MCF 10A (cell line): ENCODE measurements at regions of chr11 and their contacts with region 1.

Region 1: DNA sequence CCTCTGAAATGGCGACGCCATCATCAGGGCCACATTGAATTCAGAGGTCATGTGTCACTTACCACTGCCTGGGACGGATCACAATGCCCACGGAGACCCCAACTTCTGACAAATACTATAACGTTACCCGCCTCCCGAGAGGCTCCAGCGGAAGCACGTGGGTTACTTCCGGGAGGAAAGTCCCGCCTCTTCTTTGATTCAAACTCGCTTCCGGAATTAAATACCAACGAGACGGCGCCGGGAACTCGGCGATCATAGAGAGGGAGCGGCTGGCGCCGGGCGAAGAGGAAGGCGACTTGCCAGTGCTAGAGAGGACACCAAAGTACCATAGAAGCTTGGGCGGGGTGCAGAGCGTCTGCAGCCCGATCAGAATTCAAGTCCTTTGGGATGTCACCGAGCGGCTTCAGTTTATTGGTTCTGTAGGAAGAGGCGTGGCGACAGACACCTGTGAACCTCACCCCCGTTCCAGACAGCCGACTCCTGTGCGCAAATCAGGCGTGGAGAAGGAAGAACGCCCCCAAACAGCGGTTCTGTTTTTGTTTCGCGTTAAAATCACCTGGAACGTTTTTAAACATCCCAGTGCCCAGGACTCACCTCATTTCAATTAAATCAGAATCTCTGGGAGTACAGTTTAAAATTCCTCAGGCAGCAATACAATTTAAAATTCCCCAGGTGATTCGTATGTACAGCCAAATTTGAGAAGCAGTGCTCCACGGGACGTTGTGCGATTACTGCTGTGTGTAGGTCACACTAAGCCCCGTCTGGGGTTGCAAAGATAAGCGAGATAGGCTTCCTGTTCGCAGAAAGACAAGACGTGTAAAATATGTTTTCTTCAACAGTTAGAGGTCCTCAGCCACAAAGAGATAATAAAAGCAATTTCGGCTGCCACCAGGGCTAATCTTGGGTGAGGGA is at the start of gene TIMM10:
- DNase-seq: peak; percentile 98
- H3K4me3 Mint-ChIP-seq: peak within 1 kb of the TSS; percentile 96
- H3K27ac Mint-ChIP-seq: peak within 1 kb of the TSS; percentile 79
- H3K4me1 Mint-ChIP-seq: peaks cover 11% of the 10 kb centered on the region
- H3K27me3 Mint-ChIP-seq: peaks cover 8% of the 10 kb centered on the region
- CTCF ChIP-seq: no peak
- total RNA-seq, gene TIMM10: 52.2 and 80.3 TPM in 2 replicates

Region 2: DNA sequence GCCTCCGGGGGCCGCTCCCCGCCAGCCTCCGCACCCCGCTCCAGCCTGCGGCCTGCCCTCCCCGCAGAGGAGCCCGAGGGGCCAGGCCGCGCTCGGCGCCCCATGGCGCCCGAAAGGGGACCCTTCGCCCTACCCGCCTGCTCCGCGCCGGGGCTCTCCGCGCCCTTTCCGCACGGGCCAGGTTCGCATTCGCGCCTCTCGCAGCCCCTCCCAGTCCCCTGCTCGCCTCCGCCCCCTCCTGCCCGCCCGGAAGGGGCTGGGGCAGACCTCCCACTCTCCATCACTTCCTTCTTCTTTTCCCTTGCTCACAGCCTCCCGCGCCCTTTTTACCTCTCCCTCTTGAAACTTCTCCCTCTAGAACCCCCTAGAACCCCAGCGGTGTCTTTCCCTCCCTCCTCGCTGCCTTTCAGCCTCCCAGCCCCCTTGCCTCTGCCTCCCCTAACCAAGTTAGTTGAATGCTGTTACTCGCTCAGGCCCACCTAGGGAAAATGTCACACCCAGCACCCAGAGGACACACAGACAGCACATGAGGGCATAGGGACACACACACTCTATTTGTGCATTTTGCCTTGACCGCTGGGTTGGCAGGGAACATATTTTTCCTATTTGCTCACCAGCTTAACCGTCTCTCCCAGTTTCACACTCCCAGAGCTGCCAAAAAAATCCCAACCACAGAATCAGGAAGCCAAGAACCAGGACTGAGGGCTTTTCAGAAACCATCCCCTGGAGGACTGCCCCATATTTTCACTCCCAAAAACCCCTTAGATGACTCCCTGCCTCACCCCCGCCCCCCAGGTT is 103.7 kb before region 1 on chr11 and contains the start of gene SLC43A3:
- CTCF ChIA-PET with region 1: interaction called, 4 read pairs
- POLR2A ChIA-PET with region 1: interaction called, 11 read pairs
- intact Hi-C with region 1: no loop called
- DNase-seq: peak; percentile 89
- H3K4me3 Mint-ChIP-seq: peak within 1 kb of the TSS; percentile 84
- H3K27ac Mint-ChIP-seq: peak within 1 kb of the TSS; percentile 98
- H3K4me1 Mint-ChIP-seq: peaks cover 43% of the 10 kb centered on the region
- H3K27me3 Mint-ChIP-seq: no peaks in the 10 kb centered on the region
- CTCF ChIP-seq: no peak
- total RNA-seq, gene SLC43A3: 96.6 and 112 TPM in 2 replicates

Region 3: DNA sequence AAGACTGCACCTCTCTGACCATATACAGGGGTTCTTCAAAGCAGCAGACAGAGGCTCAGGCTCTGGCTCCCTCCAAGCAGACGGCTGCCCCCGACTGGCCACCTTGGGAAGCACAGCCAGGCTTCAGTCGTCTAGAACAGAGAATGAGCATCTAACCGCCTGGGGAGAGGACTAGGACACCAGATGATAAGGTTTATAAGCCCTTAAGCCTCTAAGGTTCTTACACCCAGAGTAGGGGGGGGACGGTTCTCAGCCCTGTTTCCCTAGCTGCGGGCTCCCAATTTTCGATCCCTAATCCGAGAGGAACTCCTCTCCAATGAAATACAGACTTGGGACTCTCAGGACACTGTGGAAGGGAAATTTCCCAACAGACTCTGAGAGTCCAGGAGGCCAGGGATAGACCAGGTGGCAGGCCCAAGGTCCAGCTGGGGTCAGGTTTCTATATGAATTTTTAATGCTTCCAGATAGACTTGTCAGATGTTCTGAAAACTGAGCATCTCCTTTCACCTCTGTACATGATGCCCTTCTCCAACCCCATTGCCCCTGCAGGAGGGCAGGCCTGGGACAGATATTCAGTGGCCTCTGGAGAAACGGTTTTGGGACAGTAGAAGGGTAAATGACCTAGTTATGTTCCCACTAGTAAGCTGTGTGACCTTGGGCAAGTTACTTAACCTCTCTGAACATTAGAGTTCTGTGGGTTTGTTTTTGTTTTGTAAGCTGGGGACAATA is 50.3 kb before region 1 on chr11:
- CTCF ChIA-PET with region 1: interaction called, 19 read pairs
- POLR2A ChIA-PET with region 1: interaction called, 3 read pairs
- intact Hi-C with region 1: no loop called
- DNase-seq: peak; percentile 68
- H3K4me3 Mint-ChIP-seq: no peak overlapping the region
- H3K27ac Mint-ChIP-seq: no peak overlapping the region
- H3K4me1 Mint-ChIP-seq: peaks cover 2% of the 10 kb centered on the region
- H3K27me3 Mint-ChIP-seq: peaks cover 24% of the 10 kb centered on the region
- CTCF ChIP-seq: peak; percentile 72

Region 4: GRCh38 chr11:57499413-57499982 is 31.4 kb before region 1 on chr11:
- CTCF ChIA-PET with region 1: interaction called, 212 read pairs
- POLR2A ChIA-PET with region 1: no interaction called
- intact Hi-C with region 1: no loop called
- DNase-seq: peak; percentile 91
- H3K4me3 Mint-ChIP-seq: peak overlapping the region; percentile 35
- H3K27ac Mint-ChIP-seq: peak overlapping the region; percentile 35
- H3K4me1 Mint-ChIP-seq: peaks cover 8% of the 10 kb centered on the region
- H3K27me3 Mint-ChIP-seq: no peaks in the 10 kb centered on the region
- CTCF ChIP-seq: no peak

Region 5: DNA sequence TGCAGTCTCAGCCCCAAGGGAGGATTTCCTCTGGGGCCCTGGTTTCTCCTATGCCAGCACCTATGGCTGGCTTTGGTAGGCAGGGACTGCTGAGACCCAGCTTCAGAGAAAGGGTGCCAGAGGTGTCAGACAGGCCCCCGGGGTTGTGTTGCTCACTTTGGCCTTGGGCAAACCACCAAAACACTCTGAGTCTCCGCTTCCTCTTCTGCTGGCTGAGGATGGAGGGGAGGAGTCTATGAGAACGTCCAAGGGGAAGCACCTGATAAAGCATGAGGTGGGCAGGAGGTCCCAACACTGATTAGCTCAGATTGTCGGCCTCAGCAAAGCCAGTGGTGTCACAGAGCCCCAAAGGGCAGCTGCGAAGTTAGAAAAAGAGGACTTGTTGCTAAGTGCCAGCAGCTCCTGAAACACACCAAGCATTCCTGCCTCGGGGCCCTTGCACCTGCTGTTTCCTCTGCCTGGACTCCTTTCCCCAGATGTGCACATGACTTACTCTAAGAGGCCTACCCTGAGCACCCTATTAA is 17.1 kb after region 1 on chr11:
- CTCF ChIA-PET with region 1: interaction called, 10 read pairs
- POLR2A ChIA-PET with region 1: interaction called, 3 read pairs
- intact Hi-C with region 1: no loop called
- DNase-seq: no peak
- H3K4me3 Mint-ChIP-seq: no peak overlapping the region
- H3K27ac Mint-ChIP-seq: no peak overlapping the region
- H3K4me1 Mint-ChIP-seq: peaks cover 7% of the 10 kb centered on the region
- H3K27me3 Mint-ChIP-seq: peaks cover 11% of the 10 kb centered on the region
- CTCF ChIP-seq: no peak

Region 6: DNA sequence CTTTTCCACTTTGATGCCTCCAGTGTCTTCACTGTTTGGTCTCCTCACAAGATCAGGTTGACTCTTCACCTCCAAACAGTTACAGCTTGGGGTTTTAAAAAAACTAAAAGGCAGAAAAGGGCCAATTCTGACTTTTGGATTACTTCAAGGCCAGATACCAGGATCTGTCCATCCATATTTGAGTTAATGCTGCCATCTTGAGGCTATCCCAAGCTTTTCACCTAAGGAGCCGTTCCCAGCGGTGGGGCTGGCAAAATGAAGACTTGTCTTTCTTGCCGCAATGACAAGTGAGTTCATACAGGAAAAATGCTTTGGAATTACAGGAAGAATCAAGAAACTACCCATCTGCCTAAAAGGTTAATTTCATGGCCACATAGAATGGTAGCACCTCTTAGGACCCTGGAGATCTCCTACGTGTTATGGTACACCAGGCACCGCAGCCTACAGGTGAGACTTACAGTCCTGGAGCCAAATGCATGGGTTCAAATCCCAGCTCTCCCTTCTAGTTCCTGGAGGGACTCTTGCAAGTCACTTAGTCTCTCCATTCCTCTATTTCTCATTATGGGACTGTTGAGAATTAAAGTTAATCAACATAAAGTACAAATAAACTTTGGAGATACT is 983.0 kb after region 1 on chr11:
- CTCF ChIA-PET with region 1: no interaction called
- POLR2A ChIA-PET with region 1: no interaction called
- intact Hi-C with region 1: loop called (anchors 10 kb)
- DNase-seq: peak; percentile 76
- H3K4me3 Mint-ChIP-seq: no peak overlapping the region
- H3K27ac Mint-ChIP-seq: no peak overlapping the region
- H3K4me1 Mint-ChIP-seq: peaks cover 5% of the 10 kb centered on the region
- H3K27me3 Mint-ChIP-seq: peaks cover 10% of the 10 kb centered on the region
- CTCF ChIP-seq: peak; percentile 75